ENCODE measurements at regions of chr7 and their contacts with region 1.

Region 1: GRCh38 chr7:8217200-8218068 is 44.5 kb downstream of the ICA1 start:
- DNase-seq: no peak
- ATAC-seq: peak; percentile 78
- H3K4me3 ChIP-seq: no peak overlapping the region
- H3K27ac ChIP-seq: no peak overlapping the region
- H3K4me1 ChIP-seq: no peaks in the 10 kb centered on the region
- H3K27me3 ChIP-seq: no peaks in the 10 kb centered on the region

Region 2: DNA sequence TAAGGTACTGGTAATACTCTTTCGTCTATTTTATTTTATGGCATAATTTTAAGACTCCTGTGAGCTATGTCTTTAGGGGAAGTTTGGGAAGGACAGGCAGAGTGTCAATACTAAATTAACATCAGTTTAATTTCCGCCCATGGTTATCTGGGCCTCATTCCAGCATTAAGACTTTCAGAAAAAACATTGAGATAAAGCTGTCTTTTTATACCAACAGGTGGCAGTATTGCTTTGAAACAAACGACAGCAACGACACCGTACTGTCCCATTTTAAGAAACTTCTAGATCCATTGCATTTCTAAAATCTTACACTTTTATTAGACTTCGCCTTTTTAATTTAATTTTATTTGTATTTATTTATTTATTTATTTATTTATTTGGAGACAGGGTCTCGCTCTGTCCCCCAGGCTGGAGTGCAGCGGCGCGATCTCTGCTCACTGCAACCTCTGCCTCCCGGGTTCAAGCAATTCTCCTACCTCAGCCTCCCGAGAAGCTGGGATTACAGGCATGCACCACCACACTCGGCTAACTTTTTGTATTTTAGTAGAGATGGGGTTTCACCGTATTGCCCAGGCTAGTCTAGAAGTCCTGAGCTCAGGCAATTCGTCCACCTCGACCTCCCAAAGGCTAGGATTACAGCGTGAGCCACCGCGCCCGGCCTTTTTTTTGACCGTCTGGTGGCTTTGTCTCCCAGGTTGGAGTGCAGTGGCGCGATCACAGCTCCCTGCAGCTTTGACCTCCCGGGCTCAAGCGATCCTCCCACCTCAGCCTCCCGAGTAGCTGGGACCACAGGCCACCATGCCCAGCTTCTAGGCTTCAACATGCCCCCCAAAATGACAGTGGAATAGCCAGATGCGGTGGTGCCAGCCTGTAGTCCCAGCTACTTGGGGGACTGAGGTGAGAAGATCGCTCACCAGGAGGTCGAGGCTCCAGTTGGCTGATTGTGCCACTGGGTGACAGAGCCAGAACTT is 1113.8 kb before region 1 on chr7:
- intact Hi-C with region 1: loop called in 1 of 2 experiments (anchors 10 kb)
- DNase-seq: no peak
- ATAC-seq: peak; percentile 77
- H3K4me3 ChIP-seq: no peak overlapping the region
- H3K27ac ChIP-seq: no peak overlapping the region
- H3K4me1 ChIP-seq: no peaks in the 10 kb centered on the region
- H3K27me3 ChIP-seq: no peaks in the 10 kb centered on the region

Region 3: DNA sequence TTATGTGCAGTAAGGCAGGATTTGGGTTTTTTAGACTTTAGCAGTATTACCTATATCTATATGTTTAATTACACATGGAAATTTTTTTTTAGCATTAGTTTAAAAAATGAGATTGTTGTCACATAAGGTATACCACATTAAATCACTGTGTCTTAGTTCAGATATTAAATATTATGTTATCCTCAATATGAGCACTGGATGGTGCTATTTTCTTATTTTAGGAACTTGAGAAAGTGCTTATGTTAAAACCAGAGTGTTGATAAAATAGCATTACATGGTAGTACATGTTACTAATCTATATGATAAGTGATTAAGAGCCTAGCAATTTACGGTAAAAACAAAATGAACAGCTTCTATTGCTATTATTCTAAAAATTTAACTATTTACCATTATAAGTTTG is 622.0 kb before region 1 on chr7:
- intact Hi-C with region 1: loop called (anchors 10 kb)
- DNase-seq: no peak
- ATAC-seq: no peak
- H3K4me3 ChIP-seq: no peak overlapping the region
- H3K27ac ChIP-seq: no peak overlapping the region
- H3K4me1 ChIP-seq: no peaks in the 10 kb centered on the region
- H3K27me3 ChIP-seq: no peaks in the 10 kb centered on the region

Measured in aorta (tissue), 5 donors.